ENCODE measurements at regions of chr10 and their contacts with region 1.

Region 1: GRCh38 chr10:28676968-28677887 is at the start of gene BAMBI:
- DNase-seq: peak; percentile 95
- total RNA-seq, gene BAMBI: 46.6 TPM

Region 2: DNA sequence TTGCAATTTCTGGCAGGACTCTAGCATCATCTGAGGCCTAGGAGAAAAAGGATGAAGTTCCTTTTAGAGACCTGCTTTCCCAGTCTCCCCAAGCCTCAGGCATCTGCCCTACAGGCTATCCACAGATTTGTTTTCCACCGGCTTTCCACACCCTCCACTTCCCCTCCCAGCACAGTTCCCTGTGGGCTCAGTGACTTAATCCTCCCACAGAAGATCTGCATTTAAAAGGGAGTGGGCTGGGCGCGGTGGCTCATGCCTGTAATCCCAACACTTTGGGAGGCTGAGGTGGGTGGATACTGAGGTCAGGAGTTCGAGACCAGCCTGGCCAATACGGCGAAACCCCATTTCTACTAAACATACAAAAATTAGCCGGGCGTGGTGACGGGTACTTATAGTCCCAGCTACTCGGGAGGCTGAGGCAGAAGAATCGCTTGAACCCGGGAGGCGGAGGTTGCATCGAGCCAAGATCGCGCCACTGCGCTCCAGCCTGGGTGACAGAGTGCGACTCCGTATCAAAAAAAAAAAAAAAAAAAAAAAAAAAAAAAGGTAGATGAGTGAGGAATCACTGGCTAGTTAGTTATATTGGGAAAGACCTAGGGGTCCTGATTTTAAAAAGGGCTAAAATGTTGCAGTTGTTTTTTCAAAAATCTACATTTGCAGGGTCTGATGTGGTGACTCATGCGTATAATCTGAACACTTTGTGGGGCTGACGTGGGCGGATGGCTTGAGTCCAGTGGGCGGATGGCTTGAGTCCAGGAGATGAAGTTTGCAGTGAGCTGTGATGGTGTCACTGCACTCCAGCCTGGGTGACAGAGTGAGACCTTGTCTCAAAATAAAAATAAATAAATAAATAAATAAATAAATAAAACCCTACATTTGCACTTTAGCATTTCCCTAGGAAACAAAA is 119.6 kb after region 1 on chr10:
- intact Hi-C with region 1: loop called (anchors 5 kb)
- DNase-seq: peak; percentile 84

Region 3: GRCh38 chr10:28839600-28840007 is 162.4 kb after region 1 on chr10:
- intact Hi-C with region 1: loop called (anchors 2 kb)
- DNase-seq: no peak

Region 4: GRCh38 chr10:28875549-28876081 is 198.4 kb after region 1 on chr10:
- intact Hi-C with region 1: loop called (anchors 5 kb)
- DNase-seq: no peak

Region 5: DNA sequence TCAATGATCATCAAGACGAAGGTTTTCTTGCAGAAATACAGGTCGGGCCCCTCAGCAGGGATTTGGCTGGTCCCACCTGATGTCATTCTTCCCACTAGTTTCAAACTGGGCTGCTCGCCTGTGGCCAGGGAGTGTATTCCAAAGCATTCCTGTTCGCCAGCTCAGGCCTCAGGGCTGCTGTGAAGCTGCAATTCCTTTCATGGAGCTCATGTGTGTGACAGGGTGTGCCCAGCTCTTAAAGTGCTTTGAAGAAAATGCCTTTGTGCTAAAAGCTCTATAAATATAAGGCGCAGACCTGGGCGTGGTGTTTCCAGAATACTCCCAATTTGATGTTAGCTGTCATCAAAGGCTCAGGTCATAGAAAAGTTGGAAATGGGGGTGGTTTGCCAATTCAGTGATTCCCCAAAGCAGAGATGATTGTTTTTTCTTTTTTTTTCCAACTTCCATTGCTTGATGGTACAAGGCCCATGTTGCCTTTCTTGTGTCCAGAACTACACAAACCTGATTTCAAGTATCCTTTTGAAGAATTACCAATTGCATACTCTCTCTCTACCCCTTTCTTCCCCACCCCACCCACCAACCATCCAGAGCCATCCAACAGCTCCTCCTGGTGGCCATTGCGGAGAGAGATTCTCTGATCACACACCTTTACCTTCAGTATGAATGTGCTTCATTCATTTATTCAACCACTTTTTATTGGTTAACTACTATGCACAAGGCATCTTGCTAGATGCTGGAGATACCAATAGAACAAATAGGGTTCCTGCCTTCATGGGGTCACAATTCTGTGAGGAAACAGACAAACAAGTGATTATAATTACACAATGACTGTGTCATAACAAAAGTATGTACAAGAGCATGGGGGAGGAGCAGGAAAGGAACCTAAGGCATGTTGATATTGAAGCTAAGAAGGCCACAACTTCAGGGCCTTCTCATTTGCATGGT is 314.4 kb after region 1 on chr10:
- intact Hi-C with region 1: loop called (anchors 1 kb)
- DNase-seq: no peak

Region 6: DNA sequence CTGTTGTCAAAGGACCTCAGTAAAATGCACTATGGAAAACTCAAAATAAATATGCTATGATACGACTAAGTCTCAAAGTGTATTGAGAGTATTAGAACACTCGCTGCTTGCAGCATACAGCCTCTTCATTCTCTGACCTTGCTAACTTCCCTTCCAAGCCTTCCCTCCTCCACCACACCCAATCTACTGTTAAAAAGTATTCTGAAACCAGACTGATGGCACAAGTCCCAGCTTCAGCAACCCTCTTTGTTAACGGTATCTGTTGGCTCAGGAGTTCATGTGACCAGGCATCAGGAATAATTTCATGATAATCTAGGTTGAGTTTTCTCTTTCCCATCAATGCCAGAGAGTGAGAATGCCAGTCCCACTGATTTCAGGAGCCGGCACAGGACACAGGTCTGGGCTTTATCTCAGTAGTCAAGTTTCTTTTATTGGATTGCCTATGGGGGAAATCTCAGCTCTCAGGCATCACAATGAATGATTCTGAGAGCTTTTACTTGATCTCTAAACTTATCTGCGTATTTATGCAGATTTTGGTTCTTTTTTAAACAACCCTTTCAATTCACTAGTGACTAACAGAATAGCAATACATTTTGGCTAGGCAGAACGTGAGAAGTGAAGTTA is 380.6 kb after region 1 on chr10:
- intact Hi-C with region 1: loop called (anchors 5 kb)
- DNase-seq: no peak